Dendritic cell treated with granulocyte-macrophage colony-stimulating factor and Interleukin-4, amounts not matched to agents 40 ng/mL and 50 ng/mL, for 4 days (primary cell): ENCODE measurements at regions of chr9 and their contacts with region 1.

Region 1: DNA sequence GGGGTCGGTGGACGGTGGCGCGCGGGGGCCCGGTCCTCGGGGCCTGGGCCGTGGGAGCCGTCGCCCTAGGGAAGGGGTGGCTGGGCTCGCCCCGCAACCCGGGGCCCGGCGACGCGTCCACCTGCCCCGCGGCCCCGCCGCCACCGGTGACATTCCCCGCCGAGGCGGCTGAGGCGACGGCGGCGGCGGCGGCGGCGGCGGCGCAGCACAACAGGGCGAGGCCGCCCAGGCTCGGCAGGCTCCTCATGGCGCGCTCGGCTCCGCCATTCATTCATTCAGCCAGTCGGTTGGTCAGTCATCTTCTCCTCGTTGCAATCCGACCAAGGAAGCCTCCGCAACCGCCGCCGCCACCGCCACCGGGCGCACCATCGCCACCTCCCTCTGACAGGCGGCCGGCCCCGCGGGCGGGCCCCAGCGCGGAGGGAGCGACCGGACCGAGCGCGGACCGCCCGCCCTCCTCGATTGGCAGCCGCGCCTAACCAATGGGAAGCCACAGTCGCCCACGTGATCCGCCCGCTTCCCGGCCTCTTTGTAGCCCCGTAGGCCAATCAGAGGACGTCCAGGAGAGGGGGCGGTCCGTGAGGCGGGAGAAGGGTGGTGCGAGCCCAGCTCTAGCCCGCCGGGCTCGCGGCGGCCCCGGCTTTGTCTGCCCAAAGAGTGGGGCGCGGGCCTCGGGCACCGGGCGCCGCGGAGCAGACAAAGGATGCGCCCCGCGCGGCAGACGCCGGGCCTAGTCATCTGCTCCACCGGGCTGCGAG is at the start of gene MEGF9:
- H3K4me3 Mint-ChIP-seq: peak within 1 kb of the TSS; percentile 99
- H3K27ac Mint-ChIP-seq: peak within 1 kb of the TSS; percentile 98
- H3K4me1 Mint-ChIP-seq: peaks cover 40% of the 10 kb centered on the region
- H3K27me3 Mint-ChIP-seq: no peaks in the 10 kb centered on the region

Region 2: DNA sequence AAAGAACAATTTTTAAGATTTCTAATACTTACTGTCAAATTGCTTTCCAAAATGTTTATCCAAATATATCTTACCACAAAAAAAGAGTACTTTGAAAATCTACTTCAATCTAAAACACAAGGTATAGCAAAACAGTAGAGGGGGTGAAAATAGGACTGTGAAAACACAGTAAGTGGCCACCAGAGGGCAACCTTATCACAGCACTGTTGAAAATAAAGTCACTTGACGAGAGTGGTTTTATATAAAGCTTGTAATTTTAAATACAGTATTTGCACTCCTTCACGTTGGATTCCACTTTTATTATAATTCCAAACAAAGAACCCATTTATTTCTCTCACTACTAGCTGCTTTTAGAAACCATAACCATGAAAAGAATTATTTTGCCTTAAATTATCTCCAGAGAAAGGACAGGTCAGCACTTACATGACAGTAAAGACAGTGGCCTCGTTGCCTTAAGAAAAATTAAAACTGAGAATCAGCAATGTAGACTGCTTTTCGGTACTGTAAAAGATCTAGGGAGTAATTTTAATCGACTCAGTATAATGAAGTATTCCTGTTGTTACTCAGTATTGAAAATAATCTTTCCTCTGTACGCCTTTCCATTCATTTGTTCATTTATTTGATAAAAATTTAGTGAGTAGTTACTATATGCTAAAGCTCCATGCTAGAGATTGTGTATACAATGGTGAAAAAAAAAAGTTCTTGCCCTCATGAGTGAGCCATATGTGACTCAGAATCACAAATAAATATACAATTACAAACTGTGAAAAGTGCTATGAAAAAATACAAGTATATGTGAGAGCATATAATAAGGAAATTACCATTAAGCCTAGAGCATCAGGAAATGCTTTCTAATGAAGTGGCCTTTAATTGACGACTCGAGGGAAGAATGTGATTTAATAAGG is 94.3 kb before region 1 on chr9:
- intact Hi-C with region 1: loop called (anchors 2 kb)
- H3K4me3 Mint-ChIP-seq: no peak overlapping the region
- H3K27ac Mint-ChIP-seq: peak overlapping the region; percentile 39
- H3K4me1 Mint-ChIP-seq: peaks cover 28% of the 10 kb centered on the region
- H3K27me3 Mint-ChIP-seq: no peaks in the 10 kb centered on the region

Region 3: DNA sequence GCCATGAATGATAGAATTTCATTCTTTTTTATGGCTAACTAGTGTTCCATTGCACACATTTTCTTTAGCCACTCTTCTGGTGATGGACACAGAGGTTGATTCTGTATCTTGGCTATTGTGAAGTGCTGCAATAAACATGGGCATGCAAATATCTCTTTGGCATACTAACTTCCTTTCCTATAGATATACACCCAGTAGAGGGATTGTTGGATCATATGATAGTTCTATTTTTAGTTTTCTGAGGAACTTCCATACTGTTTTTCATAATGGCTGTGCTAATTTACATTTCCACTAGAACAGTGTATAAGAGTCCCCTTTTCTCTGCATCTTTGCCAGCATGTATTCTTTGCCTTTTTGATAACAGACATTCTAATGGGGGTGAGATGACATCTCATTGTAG is 83.9 kb before region 1 on chr9:
- intact Hi-C with region 1: no loop called
- H3K4me3 Mint-ChIP-seq: peak overlapping the region; percentile 24
- H3K27ac Mint-ChIP-seq: peak overlapping the region; percentile 81
- H3K4me1 Mint-ChIP-seq: peaks cover 56% of the 10 kb centered on the region
- H3K27me3 Mint-ChIP-seq: no peaks in the 10 kb centered on the region

Region 4: GRCh38 chr9:120668399-120668798 is 45.9 kb before region 1 on chr9:
- intact Hi-C with region 1: loop called (anchors 5 kb)
- H3K4me3 Mint-ChIP-seq: no peak overlapping the region
- H3K27ac Mint-ChIP-seq: no peak overlapping the region
- H3K4me1 Mint-ChIP-seq: peaks cover 39% of the 10 kb centered on the region
- H3K27me3 Mint-ChIP-seq: no peaks in the 10 kb centered on the region

Region 5: DNA sequence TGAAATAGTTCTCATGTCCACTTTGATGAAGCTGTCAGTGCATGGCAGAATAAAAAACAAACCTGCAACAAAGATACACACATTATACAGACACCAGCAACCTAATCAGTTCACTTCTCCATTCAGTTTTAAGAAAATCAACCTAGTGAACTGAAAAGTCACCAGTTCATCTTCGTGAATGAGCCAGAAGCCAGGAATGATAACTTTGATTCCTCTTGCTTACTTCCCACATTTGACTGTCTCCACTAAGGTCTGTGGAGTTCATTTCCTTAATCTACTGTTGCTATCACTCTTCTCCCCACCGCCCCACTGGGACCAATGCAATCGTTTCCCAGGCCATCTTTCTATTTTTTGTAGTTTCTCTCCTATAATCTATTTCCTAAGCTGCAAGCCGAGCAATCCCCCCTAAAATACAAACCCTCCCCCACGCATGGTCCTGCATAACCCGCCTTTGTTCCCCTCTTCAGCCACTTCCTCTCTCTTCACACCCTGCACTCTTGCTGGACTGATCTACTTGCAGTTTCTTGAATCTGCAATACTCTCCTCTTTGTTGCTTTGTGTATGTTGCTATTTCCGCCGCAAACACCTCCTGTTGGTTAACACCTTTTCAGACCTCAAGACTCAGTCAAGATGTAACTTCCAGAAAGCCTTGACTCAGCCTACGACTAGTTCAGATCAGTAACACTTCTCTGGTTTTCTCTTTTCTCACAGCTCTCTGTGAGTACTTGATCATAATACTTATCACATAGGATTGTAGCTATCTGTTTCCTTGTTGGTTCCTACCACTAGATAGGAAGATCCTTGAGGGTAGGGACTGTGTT is 639.2 kb after region 1 on chr9:
- intact Hi-C with region 1: no loop called
- H3K4me3 Mint-ChIP-seq: peak overlapping the region; percentile 64
- H3K27ac Mint-ChIP-seq: peak overlapping the region; percentile 44
- H3K4me1 Mint-ChIP-seq: peaks cover 42% of the 10 kb centered on the region
- H3K27me3 Mint-ChIP-seq: no peaks in the 10 kb centered on the region